Cardiac septum (tissue), 1 donor: ENCODE measurements at regions of chrX and their contacts with region 1.

Region 1: GRCh38 chrX:65528705-65529340 is 5.8 kb downstream of the LAS1L start:
- DNase-seq: no peak

Region 2: GRCh38 chrX:64894454-64895038 is 634.3 kb before region 1 on chrX:
- intact Hi-C with region 1: loop called (anchors 10 kb)
- DNase-seq: no peak

Region 3: GRCh38 chrX:65331371-65331770 is 197.5 kb before region 1 on chrX:
- intact Hi-C with region 1: no loop called
- DNase-seq: no peak